GM13977 (cell line): ENCODE measurements at regions of chr3 and their contacts with region 1.

Region 1: DNA sequence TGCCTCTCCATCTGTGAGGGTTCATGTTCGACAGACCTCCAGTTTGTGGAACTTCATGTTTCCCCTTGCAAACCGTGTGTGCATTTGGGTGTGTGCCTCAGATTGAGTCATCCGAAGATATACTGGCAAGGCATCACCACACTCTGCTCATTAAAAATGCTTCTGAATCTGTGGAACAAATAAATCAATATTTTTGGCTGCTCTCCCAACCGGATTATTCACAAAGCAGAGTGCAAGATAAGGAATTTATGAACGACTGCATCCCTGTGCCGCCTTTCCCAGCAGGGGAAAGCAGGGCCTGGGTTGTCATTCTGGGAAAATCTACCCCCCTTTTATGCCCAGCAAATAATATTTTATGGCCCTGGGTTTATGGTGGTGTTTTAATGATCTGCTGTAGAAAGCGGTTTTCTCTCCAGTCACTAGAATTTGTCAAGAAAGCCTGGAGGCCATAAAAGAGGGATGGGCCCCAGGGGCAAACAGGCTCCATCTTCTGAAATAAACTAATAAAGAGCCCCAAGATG is 4.2 kb upstream of the WNT5A start:
- DNase-seq: no peak
- CTCF ChIP-seq: no peak

Region 2: DNA sequence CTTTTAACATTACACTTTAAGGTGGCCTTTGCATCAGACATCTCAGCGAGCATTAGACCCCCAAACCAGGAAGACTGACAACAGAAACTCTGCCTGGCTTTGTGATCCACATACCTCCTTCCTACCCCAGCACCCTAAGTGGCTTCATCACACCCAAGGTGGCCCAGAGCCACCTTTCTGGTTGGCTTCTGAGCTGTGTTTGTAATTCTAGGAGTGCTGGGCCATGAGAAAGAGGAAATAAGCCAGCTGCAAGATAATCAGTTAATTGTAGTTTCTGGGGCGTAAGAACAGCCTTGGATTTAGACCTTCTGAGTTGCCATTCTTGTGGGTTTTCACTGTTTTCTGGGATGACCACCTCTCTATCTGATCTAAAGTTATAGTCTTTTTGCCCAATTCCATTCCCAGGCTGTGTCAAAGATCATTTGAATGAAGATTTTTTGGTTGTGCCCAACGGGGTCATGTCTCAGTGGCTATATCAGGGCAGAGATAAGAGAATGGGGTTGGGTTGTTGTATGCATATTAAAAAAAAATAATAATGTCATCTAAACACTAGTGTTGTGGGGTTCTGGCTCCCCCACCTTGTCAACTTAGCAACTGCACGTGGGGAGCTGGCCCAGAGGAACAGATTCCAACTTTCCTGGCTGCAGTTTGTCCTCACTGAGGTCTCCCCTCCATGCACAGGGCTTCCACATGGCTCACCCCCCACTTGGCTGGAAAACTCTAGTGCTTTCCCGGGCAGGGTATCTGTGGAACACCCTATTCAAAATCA is 230.5 kb after region 1 on chr3:
- in situ Hi-C with region 1: loop called (anchors 10 kb)
- DNase-seq: peak; percentile 30
- CTCF ChIP-seq: peak; percentile 48